ENCODE measurements at regions of chr1 and their contacts with region 1.

Region 1: GRCh38 chr1:33633019-33633801 is 160.8 kb downstream of the ZSCAN20 start:
- DNase-seq: peak; percentile 51
- H3K4me3 ChIP-seq: no peak overlapping the region
- CTCF ChIP-seq: peak; percentile 100

Region 2: GRCh38 chr1:33616773-33617172 is 16.4 kb before region 1 on chr1:
- CTCF ChIA-PET with region 1: interaction called, 75 read pairs
- POLR2A ChIA-PET with region 1: interaction called, 3 read pairs
- DNase-seq: no peak
- H3K4me3 ChIP-seq: no peak overlapping the region
- CTCF ChIP-seq: no peak

Region 3: GRCh38 chr1:33661811-33662454 is 28.7 kb after region 1 on chr1:
- CTCF ChIA-PET with region 1: interaction called, 23 read pairs
- POLR2A ChIA-PET with region 1: no interaction called
- DNase-seq: no peak
- H3K4me3 ChIP-seq: no peak overlapping the region
- CTCF ChIP-seq: no peak

Region 4: DNA sequence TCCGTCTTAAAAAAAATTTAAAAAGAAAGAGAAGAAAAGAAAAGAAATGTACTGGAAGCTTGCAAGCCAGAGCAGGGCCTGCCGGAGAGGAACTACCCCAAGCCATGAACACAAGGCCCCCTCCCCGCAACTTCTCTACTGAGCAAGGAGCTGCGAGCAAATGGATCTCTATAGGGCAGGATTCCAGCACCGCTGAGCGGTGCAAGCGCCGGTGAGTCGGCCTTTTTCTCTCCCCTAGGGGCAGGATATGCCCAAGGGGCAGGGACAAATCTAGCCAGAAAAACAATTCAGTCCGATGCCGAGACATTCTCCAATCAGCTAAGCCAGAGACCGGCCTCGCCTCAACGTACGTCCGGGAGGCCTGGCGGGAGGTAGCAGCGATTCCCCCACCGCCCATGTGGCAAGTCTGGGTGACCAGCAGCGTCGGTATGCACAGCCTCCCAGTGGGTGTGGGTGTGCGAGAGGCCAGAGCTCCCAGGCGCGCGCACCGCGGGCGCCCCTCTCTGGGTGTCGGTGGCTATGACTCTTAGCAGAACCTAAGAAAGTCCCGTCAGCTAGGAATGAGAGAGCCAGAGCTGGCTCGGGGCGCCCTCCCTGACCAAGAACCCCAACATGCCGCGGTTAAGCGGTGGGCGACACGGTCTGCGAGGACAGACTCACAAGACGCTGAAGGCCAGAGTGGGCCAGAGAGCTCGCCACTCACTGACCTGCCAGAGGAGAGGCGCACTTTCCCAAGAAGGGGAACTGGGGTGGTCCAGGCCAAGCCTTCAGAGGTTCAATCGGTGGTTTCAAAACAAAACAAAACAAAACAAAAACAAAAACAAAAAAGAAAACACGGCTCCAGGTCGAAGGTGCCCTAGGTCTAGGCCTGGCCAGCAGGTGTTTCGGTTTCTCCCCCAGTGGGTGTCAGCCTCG is 529.9 kb after region 1 on chr1:
- CTCF ChIA-PET with region 1: interaction called, 41 read pairs
- POLR2A ChIA-PET with region 1: interaction called, 6 read pairs
- DNase-seq: peak; percentile 87
- H3K4me3 ChIP-seq: peak overlapping the region; percentile 75
- CTCF ChIP-seq: peak; percentile 91

Region 5: DNA sequence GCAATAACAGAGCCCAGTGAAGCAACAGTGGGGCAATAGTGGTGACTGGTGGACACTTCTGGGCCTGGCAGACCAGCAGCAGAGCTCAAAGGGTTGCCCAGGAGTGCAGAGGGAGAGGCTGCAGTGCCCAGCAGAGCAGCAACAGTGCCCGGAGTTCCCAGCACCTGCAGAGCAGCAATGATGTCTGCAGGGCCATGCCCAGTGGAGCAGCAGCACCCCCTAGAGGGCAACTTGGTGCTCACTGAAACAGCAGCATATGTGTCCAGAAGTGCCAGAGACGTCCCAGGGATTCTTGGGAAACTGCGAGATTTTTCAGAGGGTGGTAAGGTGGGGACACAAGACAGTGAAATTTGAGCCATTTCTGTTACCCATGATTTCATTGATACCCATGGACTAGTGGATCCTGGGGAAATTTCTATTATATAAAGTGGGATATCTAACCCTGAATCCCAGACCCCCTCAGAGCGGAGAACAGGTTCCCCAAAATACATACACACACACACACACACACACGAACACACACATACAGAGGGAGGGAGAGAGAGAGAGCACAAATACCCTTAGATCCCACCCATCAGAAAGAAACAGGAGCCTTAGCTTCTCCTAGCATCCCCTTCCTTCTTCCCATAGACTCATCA is 964.8 kb after region 1 on chr1:
- CTCF ChIA-PET with region 1: interaction called, 110 read pairs
- POLR2A ChIA-PET with region 1: no interaction called
- DNase-seq: peak; percentile 12
- H3K4me3 ChIP-seq: no peak overlapping the region
- CTCF ChIP-seq: peak; percentile 91

Measured in AG04449 (cell line).